ENCODE measurements at regions of chr6 and their contacts with region 1.

Region 1: DNA sequence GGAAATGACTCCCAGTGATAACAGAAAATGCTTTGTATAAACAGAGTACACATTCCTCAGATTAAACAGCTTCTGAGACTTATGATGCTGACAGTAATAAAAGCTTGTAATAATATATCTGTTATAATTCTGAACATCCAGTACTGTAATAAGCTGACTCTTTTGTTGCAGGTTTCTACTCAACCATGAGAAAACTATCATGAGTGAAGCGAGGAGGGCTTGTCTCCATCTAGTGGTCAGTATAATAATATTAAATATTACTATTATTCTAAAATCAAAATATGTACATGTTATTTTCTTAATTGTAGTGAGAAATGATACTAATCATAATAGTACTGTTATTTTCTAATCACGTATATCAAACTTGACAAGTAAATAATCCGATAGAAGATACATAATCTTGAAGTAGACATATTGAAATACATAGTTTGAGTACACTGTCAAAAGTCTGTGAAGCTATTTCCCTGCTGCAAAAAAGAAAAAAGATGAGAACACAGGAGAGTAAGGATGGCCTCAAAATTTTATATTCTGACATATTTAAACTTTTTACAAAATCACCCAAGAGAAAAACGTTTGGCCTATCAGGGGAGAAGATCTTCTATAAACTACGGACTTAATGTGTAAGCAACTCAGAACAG is 183.1 kb downstream of the MOXD1 start:
- DNase-seq: no peak
- H3K4me3 ChIP-seq: no peak overlapping the region
- H3K27ac ChIP-seq: no peak overlapping the region
- H3K4me1 ChIP-seq: no peaks in the 10 kb centered on the region
- H3K27me3 ChIP-seq: no peaks in the 10 kb centered on the region
- CTCF ChIP-seq: peak; percentile 37 to 64 (median 52)
- EP300 ChIP-seq: no peak
- POLR2A ChIP-seq: no peak

Region 2: DNA sequence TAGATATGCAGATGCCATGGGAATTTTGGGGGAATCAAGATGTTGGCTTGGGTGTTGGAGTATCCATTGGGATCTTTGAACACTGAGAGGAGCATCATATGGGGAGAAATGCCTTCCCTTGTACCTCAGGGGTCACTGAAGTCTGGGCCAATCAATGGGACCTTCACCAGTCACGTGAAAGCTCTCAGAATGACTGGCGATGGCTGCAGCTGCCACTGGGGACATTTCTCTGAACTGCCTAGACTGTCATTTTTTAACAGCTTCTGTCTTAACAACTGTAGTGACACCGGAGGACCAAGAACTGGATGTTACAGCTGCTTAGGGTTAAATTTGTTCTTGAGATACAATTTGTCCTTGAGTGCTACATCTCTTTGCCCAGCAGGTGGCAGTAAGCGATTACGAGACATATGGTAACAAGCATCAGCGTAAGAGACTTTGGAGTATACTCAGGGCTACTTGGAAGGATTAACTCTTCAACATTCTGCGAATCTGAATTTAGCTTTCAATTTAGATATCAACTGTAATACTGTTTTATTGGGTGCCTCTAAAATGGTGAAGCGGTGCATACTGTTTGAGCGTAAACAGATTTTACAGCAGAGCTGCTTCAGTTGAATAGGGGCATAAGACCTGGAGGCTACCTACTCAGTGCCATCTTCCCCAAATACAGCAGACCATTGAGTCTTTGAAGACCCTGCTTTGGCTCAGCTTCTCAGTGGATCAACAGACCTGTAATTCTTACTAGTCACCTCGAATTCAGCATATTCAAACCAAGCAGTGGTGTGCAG is 303.0 kb before region 1 on chr6:
- in situ Hi-C with region 1: loop called in 1 of 4 experiments (anchors 5 kb)
- intact Hi-C with region 1: no loop called
- DNase-seq: peak; percentile 74
- H3K4me3 ChIP-seq: no peak overlapping the region
- H3K27ac ChIP-seq: no peak overlapping the region
- H3K4me1 ChIP-seq: peaks cover 0 to 20% (median 4%) of the 10 kb centered on the region in 4 donors
- H3K27me3 ChIP-seq: peaks cover 9% of the 10 kb centered on the region
- CTCF ChIP-seq: peak; percentile 71 to 85 (median 79)
- EP300 ChIP-seq: no peak
- POLR2A ChIP-seq: no peak

Region 3: DNA sequence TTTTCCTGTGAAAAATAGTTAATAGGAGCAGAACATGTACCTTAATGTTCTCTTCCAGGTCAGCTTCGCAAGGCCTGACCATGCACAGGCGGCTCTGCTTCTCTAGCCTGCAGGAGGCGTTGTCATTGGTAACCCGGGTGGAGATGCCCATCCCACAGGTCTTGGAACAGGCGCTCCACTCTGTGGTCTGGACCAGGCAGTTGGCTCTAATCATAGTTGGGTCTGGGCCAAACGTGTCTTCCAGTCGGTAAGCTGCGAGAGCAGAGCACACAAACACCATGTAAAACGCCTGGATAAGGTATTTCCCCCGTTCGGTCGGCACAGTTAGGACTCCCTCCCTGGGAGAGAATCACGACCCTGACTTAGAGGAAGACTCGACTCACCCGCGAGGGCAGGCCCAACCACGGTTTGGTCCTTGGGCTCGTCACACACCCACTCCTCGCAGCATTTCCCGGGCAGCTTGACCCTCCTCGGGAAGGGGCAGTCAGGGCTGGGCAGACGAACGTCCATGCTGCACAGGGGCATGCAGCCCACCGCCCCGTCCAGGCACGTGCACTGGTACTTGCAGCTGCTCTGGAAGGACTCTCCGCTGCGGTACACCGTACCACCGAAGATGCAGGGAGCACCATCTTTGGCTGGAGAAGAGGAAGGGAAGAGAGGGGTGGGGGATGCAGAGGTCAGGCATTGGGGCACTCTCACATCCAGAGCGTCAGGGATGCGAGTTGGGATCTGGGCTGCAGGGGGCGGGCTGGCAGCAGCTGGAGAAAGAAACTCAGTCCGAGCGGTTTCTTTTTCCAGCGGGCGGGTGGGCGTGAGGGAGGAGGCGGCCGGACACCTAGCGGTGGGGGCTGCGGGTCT is 268.0 kb before region 1 on chr6:
- in situ Hi-C with region 1: loop called in 1 of 4 experiments (anchors 25 kb)
- intact Hi-C with region 1: no loop called
- DNase-seq: peak; percentile 83
- H3K4me3 ChIP-seq: peak overlapping the region; percentile 68 to 83 (median 81)
- H3K27ac ChIP-seq: peak overlapping the region; percentile 95 to 97 (median 96)
- H3K4me1 ChIP-seq: peaks cover 1 to 34% (median 17%) of the 10 kb centered on the region in 4 donors
- H3K27me3 ChIP-seq: no peaks in the 10 kb centered on the region
- CTCF ChIP-seq: peak; percentile 50 to 80 (median 61)
- EP300 ChIP-seq: no peak
- POLR2A ChIP-seq: peak; percentile 1

Region 4: DNA sequence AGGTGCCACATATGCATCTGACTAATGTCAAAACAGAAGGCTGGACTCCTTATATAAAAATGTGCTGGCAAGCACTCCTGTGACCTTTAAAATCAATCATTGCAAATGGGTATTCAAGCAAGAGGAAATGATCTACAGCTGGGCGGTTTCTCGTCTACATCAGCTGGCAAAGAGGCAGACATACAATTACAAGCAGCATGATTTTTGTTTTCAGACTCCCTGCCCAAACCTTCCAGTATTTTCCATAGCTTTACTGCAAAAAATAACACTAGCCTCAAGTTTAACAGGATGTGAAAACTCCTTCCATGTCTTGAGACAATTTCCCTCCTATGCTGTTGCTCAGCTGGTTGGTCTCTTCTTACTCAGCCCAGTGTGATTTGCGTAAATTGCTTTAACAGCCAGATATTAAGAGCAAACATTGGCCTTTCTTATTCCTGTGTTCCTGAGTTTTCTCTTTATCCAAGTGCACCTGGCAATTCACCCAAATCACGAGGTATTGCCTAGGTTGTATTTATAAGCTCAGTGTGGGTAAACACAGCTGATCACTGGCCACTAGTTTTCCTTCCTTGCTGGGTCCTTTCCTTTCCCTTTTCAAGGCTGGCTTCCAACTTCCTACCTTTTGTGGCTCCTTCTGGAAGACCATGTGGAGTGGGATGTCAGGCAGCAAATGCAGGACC is 52.7 kb after region 1 on chr6:
- in situ Hi-C with region 1: no loop called
- intact Hi-C with region 1: no loop called
- DNase-seq: no peak
- H3K4me3 ChIP-seq: no peak overlapping the region
- H3K27ac ChIP-seq: no peak overlapping the region
- H3K4me1 ChIP-seq: peaks cover 0 to 9% (median 0%) of the 10 kb centered on the region in 4 donors
- H3K27me3 ChIP-seq: no peaks in the 10 kb centered on the region
- CTCF ChIP-seq: no peak
- EP300 ChIP-seq: no peak
- POLR2A ChIP-seq: no peak

Measured in transverse colon (tissue), 4 donors.